ENCODE measurements at regions of chr3 and their contacts with region 1.

Region 1: GRCh38 chr3:152471814-152472671 is 203.3 kb downstream of the MBNL1 start:
- DNase-seq: peak; percentile 48
- H3K4me3 Mint-ChIP-seq: no peak overlapping the region
- H3K27ac Mint-ChIP-seq: no peak overlapping the region
- H3K4me1 Mint-ChIP-seq: peaks cover 5% of the 10 kb centered on the region
- H3K27me3 Mint-ChIP-seq: peaks cover 6% of the 10 kb centered on the region

Region 2: DNA sequence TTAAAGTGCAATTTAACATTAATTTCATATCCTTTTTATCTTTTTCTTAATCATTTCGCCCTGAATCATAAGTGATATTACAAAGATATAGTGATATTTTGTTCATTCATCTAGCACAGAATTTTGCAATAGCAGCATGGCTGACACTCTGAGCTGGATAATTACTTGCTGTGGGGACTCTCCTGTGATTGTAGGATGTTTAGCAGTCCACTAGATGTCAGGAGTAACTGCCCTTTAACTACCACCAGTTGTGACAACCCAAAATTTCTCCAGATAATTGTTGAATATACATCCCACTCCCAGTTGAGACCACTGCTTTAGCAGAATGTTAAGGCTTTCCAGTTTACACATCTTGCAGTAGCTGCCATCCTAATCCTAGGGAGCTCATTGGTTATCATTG is 400.1 kb before region 1 on chr3:
- intact Hi-C with region 1: loop called (anchors 1 kb)
- DNase-seq: no peak
- H3K4me3 Mint-ChIP-seq: no peak overlapping the region
- H3K27ac Mint-ChIP-seq: no peak overlapping the region
- H3K4me1 Mint-ChIP-seq: peaks cover 5% of the 10 kb centered on the region
- H3K27me3 Mint-ChIP-seq: peaks cover 3% of the 10 kb centered on the region

Region 3: GRCh38 chr3:152183473-152183872 is 288.6 kb before region 1 on chr3:
- intact Hi-C with region 1: loop called (anchors 5 kb)
- DNase-seq: no peak
- H3K4me3 Mint-ChIP-seq: no peak overlapping the region
- H3K27ac Mint-ChIP-seq: no peak overlapping the region
- H3K4me1 Mint-ChIP-seq: peaks cover 39% of the 10 kb centered on the region
- H3K27me3 Mint-ChIP-seq: no peaks in the 10 kb centered on the region

Region 4: GRCh38 chr3:152443212-152444023 is 28.6 kb before region 1 on chr3:
- intact Hi-C with region 1: no loop called
- DNase-seq: no peak
- H3K4me3 Mint-ChIP-seq: no peak overlapping the region
- H3K27ac Mint-ChIP-seq: peak overlapping the region; percentile 77
- H3K4me1 Mint-ChIP-seq: peaks cover 50% of the 10 kb centered on the region
- H3K27me3 Mint-ChIP-seq: no peaks in the 10 kb centered on the region

Region 5: GRCh38 chr3:152524198-152525140 is 52.4 kb after region 1 on chr3:
- intact Hi-C with region 1: loop called (anchors 1 kb)
- DNase-seq: no peak
- H3K4me3 Mint-ChIP-seq: no peak overlapping the region
- H3K27ac Mint-ChIP-seq: no peak overlapping the region
- H3K4me1 Mint-ChIP-seq: peaks cover 1% of the 10 kb centered on the region
- H3K27me3 Mint-ChIP-seq: peaks cover 3% of the 10 kb centered on the region

Region 6: DNA sequence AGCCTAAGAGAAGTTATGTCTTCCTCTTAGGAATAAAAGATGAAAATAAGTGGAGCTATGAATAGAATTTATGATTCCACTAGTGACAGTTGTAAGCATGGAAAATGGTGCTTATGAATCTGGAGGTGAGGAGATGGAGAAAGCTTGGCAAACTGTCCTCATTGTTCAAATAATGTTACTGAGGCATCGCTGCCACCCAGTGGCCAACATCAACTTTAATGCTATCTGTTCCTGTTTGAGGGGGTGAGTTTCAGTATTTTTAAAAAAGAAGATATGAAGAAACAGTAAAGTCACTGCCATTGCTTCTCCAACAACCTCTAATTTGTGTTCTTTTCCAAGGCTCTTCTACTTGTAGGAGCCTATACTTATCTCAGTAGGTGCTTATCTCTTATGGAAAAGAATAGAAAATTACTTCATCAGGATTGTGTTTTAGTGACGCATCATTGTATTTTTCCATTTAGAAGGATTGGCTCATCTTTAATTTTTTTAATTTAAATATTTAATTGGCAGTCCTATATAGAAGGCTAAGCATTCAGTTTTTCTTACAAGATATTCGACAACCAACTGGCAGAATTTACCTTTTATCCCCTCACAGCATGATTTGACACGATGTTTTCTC is 102.5 kb after region 1 on chr3:
- intact Hi-C with region 1: loop called (anchors 1 kb)
- DNase-seq: no peak
- H3K4me3 Mint-ChIP-seq: no peak overlapping the region
- H3K27ac Mint-ChIP-seq: no peak overlapping the region
- H3K4me1 Mint-ChIP-seq: no peaks in the 10 kb centered on the region
- H3K27me3 Mint-ChIP-seq: peaks cover 36% of the 10 kb centered on the region

Measured in activated T-helper 2 cell treated with anti-CD3 and anti-CD28 coated beads, Interferon-gamma antibody, Interleukin-2, Interleukin-4, amounts not matched to agents 10 μg/mL and 5 μg/mL and 100 μg/mL, durations not matched to agents 14 hours and 24 hours and 36 hours (primary cell).